ENCODE measurements at regions of chr1 and their contacts with region 1.

Region 1: DNA sequence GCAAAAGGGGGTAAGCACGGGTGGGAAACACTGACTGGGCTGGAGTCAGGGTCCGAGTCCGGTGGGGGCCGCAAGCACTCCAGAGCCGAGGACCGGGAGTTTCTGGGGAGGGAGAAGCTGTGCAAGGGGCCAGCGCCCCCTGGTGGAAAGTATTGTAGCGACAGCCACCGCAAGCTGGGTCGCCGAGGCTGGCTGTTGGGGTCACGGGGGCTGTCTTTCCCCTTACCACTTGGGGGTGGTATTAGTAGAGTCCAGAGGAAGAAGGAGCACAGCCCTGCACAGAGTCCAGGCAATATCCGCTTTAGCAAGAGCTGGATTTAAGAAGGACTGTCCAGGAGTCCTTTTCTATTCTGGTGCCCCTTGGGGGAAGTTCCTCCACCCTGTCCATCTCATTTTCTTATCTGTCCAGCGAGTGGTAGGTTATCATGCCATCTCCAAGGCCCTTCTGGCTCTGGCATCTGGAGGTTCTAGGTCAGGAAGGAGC is 17.9 kb upstream of the ETV3 start:
- DNase-seq: peak; percentile 80
- H3K4me3 Mint-ChIP-seq: no peak overlapping the region
- H3K27ac Mint-ChIP-seq: peak overlapping the region; percentile 30
- H3K4me1 Mint-ChIP-seq: peaks cover 43% of the 10 kb centered on the region
- H3K27me3 Mint-ChIP-seq: peaks cover 28% of the 10 kb centered on the region

Region 2: DNA sequence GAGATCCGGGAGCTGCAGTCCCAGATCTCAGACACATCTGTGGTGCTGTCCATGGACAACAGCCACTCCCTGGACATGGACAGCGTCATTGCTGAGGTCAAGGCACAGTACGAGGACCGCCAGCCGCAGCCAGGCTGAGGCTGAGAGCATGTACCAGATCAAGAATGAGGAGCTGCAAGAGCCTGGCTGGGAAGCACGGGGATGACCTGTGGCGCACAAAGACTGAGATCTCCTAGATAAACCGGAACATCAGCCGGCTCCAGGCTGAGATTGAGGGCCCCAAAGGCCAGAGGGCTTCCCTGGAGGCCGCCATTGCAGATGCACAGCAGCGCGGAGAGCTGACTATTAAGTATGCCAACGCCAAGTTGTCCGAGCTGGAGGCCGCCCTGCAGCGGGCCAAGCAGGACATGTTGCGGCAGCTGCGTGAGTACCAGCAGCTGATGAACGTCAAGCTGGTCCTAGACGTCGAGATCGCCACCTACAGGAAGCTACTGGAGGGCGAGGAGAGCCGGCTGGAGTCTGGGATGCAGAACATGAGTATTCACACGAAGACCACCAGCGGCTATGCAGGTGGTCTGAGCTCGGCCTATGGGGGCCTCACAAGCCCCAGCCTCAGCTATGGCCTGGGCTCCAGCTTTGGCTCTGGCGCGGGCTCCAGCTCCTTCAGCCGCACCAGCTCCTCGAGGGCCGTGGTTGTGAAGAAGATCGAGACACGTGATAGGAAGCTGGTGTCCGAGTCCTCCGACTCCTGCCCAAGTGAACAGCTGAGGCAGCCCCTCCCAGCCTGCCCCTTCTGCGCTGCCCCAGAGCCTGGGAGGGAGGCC is 81.9 kb before region 1 on chr1:
- CTCF ChIA-PET with region 1: interaction called, 10 read pairs
- POLR2A ChIA-PET with region 1: no interaction called
- DNase-seq: peak; percentile 40
- H3K4me3 Mint-ChIP-seq: no peak overlapping the region
- H3K27ac Mint-ChIP-seq: no peak overlapping the region
- H3K4me1 Mint-ChIP-seq: no peaks in the 10 kb centered on the region
- H3K27me3 Mint-ChIP-seq: peaks cover 30% of the 10 kb centered on the region

Region 3: DNA sequence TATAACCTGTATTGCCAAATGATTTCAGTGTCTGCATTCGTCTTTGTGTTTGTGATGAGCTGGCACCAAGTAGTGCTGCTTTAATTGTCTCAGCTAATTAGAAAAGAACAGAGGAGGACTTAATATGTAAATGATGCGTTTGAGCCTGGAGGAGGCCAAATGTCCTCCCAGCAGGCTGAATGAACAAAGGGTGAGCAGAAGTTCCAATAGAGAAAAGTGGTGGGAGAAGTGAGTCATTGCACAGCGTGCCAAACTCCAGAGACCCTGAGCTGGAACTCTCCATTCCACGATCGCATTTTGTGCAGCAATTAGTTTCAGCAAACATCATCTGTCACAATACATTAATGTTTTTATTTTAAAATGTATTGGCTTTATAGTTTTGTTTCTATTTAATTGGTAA is 74.4 kb before region 1 on chr1:
- CTCF ChIA-PET with region 1: interaction called, 436 read pairs
- POLR2A ChIA-PET with region 1: no interaction called
- DNase-seq: no peak
- H3K4me3 Mint-ChIP-seq: no peak overlapping the region
- H3K27ac Mint-ChIP-seq: no peak overlapping the region
- H3K4me1 Mint-ChIP-seq: no peaks in the 10 kb centered on the region
- H3K27me3 Mint-ChIP-seq: peaks cover 24% of the 10 kb centered on the region

Region 4: GRCh38 chr1:157090196-157090647 is 65.9 kb before region 1 on chr1:
- CTCF ChIA-PET with region 1: interaction called, 436 read pairs
- POLR2A ChIA-PET with region 1: interaction called, 30 read pairs
- DNase-seq: peak; percentile 86
- H3K4me3 Mint-ChIP-seq: no peak overlapping the region
- H3K27ac Mint-ChIP-seq: no peak overlapping the region
- H3K4me1 Mint-ChIP-seq: no peaks in the 10 kb centered on the region
- H3K27me3 Mint-ChIP-seq: peaks cover 6% of the 10 kb centered on the region

Region 5: DNA sequence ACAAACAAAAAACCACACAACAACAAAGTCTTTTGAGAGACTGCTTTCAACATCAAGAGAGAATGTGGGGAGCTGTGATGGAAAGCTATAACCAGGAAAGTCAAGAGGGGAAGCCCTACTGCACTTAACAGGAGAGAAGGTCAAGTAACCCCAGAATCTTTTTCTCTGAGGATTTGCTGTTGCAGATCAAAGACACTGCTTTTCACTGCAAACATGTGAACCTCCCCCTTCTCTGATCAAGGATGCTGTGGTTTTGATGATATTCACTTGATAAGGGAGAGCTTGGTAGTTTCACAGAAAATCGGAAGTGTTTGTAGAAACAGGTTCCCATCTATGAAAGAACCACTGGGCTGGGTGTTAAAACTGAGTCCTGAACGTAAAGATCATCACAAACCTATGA is 22.7 kb before region 1 on chr1:
- CTCF ChIA-PET with region 1: interaction called, 13 read pairs
- POLR2A ChIA-PET with region 1: interaction called, 13 read pairs
- DNase-seq: no peak
- H3K4me3 Mint-ChIP-seq: peak overlapping the region; percentile 64
- H3K27ac Mint-ChIP-seq: peak overlapping the region; percentile 86
- H3K4me1 Mint-ChIP-seq: peaks cover 66% of the 10 kb centered on the region
- H3K27me3 Mint-ChIP-seq: no peaks in the 10 kb centered on the region

Region 6: DNA sequence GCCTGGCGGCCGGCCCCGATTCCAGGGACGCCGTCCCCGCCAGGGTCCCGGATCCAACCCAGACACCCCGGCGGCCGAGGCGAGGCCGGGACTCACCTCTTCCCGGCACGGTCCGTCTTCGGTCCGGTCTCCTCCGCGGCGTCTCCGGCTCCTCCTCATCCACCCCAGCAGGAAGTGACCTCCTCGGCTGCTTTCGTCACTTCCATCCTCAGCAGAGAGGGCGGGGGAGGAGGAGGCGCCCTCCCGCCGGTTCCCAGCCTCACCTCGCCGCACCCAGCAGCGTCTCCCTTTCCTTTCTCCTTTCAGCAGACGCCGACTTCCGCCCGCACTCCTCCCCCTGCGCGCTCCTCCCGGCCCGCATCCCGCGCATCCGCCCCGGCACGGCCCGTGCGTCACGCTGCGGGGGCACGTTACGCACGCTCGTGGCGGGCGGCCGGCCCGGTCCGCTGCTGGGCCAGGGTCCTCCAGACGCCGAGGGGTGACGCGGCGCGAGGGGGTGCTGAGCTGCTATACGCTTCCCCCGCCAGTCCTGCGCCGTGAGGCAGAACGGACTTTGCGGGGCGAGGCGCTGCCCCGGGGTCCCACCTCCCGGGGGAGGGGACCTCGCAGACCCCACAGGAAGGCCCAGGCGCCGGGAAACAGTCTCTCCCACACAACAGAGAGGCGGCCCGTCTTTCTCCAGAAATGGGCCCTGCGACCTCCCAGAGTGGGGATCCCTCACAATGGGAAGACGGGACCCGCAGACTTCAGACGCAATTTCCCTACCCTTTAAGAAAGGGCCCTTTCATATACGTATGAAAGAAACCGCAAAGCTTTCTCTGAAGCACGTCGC is 17.7 kb before region 1 on chr1 and contains the start of gene ETV3:
- CTCF ChIA-PET with region 1: interaction called, 13 read pairs
- POLR2A ChIA-PET with region 1: interaction called, 13 read pairs
- DNase-seq: peak; percentile 94
- H3K4me3 Mint-ChIP-seq: peak within 1 kb of the TSS; percentile 92
- H3K27ac Mint-ChIP-seq: peak within 1 kb of the TSS; percentile 86
- H3K4me1 Mint-ChIP-seq: peaks cover 51% of the 10 kb centered on the region
- H3K27me3 Mint-ChIP-seq: no peaks in the 10 kb centered on the region
- total RNA-seq, gene ETV3: 47.5 to 51.1 TPM

Region 7: GRCh38 chr1:157176591-157177121 is 20.6 kb after region 1 on chr1:
- CTCF ChIA-PET with region 1: interaction called, 12 read pairs
- POLR2A ChIA-PET with region 1: no interaction called
- DNase-seq: no peak
- H3K4me3 Mint-ChIP-seq: no peak overlapping the region
- H3K27ac Mint-ChIP-seq: no peak overlapping the region
- H3K4me1 Mint-ChIP-seq: no peaks in the 10 kb centered on the region
- H3K27me3 Mint-ChIP-seq: peaks cover 38% of the 10 kb centered on the region

Region 8: DNA sequence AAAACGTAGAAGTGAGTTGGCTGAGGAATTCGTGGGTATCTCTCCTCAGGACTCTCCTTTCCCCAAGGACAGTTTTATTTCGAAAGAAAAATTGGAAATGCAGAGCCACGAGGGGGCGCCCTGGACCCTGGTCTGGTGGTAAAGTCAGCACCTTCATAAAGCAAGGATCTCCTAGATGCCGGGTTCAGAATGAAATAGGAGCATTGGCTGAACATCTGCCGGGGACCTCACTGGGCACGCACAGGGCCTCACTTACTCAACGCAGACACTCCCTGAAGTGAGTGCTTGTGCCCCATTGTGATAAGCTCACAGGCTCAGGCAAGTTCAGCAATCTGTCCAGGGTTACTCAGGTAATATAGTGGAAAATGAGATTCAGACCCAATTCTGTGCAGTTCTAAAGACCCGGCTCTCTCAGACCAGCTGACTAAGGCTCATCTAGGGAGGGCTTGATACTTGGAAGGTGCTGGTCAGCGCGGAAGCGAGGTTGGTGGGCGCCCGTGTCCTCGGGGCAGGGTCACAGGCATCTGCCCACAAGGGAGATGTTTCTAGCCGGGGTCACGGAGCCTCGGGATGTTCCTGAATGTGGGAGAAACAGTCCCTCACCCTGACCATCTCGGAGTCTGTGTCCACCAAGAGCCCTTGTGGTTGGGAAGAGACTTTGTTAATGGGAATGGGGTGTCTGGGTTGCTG is 37.7 kb after region 1 on chr1:
- CTCF ChIA-PET with region 1: no interaction called
- POLR2A ChIA-PET with region 1: no interaction called
- DNase-seq: peak; percentile 61
- H3K4me3 Mint-ChIP-seq: no peak overlapping the region
- H3K27ac Mint-ChIP-seq: no peak overlapping the region
- H3K4me1 Mint-ChIP-seq: peaks cover 3% of the 10 kb centered on the region
- H3K27me3 Mint-ChIP-seq: peaks cover 30% of the 10 kb centered on the region

Measured in activated CD4-positive, alpha-beta memory T cell treated with anti-CD3 and anti-CD28 coated beads, Interleukin-2, amount 10 ng/mL, durations not matched to agents 7 days and 5 days (primary cell).